Heart right ventricle (tissue), 16 donors: ENCODE measurements at regions of chr1 and their contacts with region 1.

Region 1: DNA sequence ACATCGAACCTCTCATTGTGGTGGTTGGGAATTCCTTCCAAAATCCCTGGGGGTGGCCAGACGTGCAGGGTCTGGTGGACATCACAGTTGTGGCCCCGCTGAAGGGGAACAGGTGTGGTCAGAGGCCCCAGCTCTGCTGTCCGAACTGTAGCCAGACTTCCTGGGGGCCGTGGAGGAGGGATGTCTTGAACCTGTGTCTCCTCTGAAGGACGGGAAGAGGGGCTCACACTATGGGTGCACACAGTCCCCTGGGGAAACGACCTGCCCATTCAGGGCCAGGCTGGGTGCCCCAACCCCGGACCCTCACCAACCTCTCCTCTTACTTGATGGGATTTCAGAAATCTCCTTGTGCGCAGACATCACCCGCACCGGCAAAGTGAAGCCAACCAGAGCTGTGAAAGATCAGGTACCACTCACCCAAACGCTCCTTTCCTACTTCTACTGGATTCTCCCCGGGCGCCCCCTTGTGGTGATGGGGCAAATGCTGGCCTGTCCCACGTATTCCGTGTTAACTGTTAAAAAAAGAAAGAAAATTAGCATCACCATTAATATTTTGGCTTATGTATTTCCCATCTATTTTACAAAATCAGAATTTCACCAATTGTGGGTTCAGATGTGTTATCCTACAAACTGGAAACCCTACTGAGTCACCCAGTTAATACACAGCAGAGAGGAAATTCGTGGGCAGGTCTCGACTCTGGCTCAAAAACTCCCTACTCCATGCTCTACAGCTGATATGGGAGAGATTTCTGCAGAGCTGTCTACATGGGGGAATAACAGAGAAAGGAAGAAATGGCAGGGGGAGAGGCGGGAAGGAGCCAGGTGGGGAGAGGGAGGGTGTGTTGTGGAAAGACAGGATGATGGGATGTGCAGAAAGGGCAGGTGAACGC is 28.1 kb downstream of the PADI4 start:
- DNase-seq: peak; percentile 40 to 46
- ATAC-seq: peak in 1 of 8 donors; percentile 51
- H3K4me3 ChIP-seq: no peak overlapping the region
- H3K27ac ChIP-seq: no peak overlapping the region
- H3K4me1 ChIP-seq: no peaks in the 10 kb centered on the region
- H3K27me3 ChIP-seq: peaks cover 0 to 46% (median 21%) of the 10 kb centered on the region in 7 donors
- CTCF ChIP-seq: peak; percentile 40 to 90 (median 68)

Region 2: DNA sequence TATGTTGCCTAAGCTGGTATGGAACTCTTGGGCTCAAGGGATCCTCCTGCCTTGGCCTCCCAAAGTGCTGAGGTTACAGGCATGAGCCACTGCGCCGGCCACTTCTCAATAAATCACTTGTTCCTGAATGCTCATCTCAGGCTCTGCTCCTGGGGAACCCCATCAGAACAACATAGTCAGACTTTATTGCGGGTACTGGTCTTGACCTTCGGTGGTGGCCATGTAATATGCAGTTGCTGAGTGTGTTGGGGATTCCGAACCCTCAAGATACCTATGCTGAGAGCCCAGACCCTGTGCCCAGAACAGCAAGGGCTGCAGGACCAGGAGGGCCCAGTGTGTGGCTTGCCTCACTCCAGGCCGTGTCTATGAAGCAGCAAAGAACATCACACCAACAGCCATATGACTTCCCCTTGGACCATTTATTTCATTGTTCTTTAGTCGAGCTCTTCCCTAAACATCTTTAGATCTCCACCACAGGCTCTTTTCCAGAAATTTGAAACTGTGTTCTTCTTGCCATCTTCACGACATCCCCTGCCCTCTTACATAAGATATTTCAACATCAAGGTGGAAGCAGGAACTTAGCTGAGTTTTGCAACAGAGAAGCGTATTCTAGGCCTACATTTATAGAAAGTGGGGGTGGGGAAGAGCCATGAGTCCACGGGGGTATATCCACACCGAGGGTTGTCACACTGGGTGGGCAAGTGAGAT is 269.6 kb before region 1 on chr1:
- intact Hi-C with region 1: loop called in 4 of 10 experiments (anchors 5 to 10 kb)
- DNase-seq: no peak
- ATAC-seq: no peak
- H3K4me3 ChIP-seq: no peak overlapping the region
- H3K27ac ChIP-seq: peak overlapping the region in 1 of 10 donors; percentile 78
- H3K4me1 ChIP-seq: peaks cover 0 to 50% (median 7%) of the 10 kb centered on the region in 9 donors
- H3K27me3 ChIP-seq: no peaks in the 10 kb centered on the region
- CTCF ChIP-seq: no peak

Region 3: DNA sequence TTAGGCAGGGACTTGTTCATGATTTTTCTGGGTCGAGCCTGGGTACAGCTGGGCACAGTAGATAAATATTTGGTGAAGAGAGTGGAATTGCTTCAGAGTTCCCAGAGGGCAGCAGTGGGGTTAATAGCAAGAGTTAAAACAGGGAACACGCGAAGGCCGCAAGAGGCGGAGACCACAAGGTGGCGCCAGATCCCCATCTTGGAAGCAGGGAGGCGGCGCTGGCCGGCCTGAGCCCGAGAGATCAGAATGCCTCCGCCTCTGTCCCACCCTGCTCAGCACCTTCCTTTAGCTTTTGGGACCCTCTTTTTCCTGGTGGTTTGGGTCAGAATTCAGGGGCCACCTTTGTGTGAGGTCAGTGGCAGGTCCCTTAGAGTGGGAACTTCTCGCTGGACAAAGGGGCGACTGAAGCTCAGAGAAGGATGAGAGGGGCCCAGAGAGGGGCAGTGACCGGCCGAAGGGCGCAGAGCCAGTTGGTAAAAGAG is 210.3 kb before region 1 on chr1:
- intact Hi-C with region 1: loop called in 7 of 10 experiments (anchors 5 to 10 kb)
- DNase-seq: peak; percentile 84 to 89
- ATAC-seq: peak; percentile 77 to 88 (median 83)
- H3K4me3 ChIP-seq: no peak overlapping the region
- H3K27ac ChIP-seq: no peak overlapping the region
- H3K4me1 ChIP-seq: peaks cover 0 to 43% (median 5%) of the 10 kb centered on the region in 9 donors
- H3K27me3 ChIP-seq: peaks cover 0 to 16% (median 2%) of the 10 kb centered on the region in 7 donors
- CTCF ChIP-seq: peak; percentile 85 to 98 (median 92)

Region 4: DNA sequence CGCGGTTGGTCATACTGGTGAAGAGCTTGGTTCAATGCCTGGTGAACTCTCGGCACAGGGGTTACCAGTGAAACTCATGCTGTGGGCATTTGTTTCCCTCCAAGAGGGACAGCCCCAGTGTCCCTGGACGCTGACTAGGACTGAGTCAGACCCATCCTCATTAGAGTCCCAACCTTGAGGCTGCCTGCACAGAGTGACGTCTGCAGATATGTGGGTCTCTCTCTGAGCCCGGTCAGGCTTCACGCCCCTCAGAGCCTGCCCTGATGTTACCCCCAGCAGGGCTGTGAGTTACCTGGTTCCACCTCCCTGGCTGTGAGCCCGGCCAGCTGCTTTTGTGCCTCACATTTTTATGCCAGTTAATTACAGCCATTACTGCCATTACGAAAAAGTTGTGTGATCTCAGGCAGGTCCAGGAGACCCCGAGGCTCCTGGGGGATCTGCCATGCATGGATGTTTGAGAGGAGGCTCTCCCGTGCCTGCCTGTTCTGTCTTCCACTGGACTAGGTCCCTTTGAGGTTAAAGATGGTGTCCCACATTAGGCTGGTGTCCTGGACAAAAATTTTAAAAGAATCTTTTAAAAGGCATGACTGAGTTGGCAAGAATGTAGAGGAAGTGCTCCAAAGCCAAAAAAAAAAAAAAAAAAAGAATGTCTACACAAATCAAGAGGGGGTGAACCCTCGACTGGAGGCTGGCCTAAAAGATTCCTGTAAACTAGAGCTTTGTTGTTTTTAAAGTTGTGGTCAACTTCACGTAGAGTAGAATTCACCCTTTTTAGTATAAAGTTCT is 167.8 kb before region 1 on chr1:
- intact Hi-C with region 1: no loop called
- DNase-seq: no peak
- ATAC-seq: no peak
- H3K4me3 ChIP-seq: no peak overlapping the region
- H3K27ac ChIP-seq: no peak overlapping the region
- H3K4me1 ChIP-seq: no peaks in the 10 kb centered on the region
- H3K27me3 ChIP-seq: peaks cover 0 to 35% (median 17%) of the 10 kb centered on the region in 7 donors
- CTCF ChIP-seq: no peak

Region 5: DNA sequence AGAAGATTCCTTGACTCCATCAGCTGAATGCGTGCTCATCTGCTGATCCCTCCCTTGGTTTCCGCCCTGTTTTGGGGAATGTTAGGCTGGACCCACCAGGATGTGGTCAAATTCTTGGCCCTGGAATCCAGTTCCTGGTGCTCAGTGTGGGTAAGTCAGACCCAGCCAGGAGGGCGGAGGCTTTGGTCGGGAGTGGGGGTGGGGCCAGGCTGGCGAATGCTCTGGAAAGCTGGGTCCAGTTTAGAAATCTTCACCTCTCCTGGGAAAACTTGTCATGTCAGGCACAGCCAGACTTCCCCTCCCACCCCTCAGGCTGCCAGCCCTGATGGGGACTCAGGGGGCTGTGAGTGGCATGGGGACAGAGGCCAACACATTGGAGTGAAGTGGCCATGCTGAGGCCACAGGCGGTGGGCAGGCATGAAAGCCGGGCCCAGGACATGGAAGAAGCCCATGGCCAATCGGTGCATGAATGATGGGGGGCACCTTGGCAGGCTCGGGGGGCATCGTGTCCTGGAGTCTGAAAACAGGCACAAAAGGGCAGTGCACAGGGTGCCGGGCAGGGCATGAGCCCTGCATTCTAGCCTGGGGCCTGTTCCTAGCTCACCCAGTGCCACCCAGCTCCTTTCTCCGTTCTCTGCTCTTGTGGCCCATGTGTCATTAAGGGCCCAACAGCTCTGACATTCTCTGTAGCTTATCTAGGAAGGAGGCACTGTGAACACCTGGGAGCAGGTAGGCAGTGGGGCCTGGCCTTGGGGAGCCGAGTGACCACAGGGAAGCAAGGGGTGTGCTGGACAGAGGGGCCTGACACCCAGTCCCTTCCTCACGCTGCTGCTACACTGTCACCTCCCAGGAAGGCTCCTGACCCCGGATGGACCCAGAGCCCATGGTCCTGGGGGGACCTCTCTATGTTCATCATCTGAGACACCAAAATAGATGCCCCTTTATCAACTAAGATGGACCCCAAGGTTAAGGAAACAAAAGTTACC is 145.8 kb before region 1 on chr1:
- intact Hi-C with region 1: no loop called
- DNase-seq: no peak
- ATAC-seq: no peak
- H3K4me3 ChIP-seq: no peak overlapping the region
- H3K27ac ChIP-seq: no peak overlapping the region
- H3K4me1 ChIP-seq: no peaks in the 10 kb centered on the region
- H3K27me3 ChIP-seq: peaks cover 0 to 46% (median 22%) of the 10 kb centered on the region in 7 donors
- CTCF ChIP-seq: no peak